HepG2 (cell line): ENCODE measurements at regions of chr7 and their contacts with region 1.

Region 1: GRCh38 chr7:107725151-107725740 is 18.7 kb upstream of the CBLL1 start:
- DNase-seq: peak; percentile 52
- ATAC-seq: no peak
- H3K4me3 ChIP-seq: no peak overlapping the region
- H3K27ac ChIP-seq: no peak overlapping the region
- H3K4me1 ChIP-seq: no peaks in the 10 kb centered on the region
- H3K27me3 ChIP-seq: no peaks in the 10 kb centered on the region; a peak in 1 of 5 replicates
- CTCF ChIP-seq: peak; percentile 73
- EP300 ChIP-seq: no peak
- POLR2A ChIP-seq: no peak
- RAD21 ChIP-seq: peak; percentile 35; the same call in 1 of the 2 replicates

Region 2: GRCh38 chr7:106793015-106793975 is 932.0 kb before region 1 on chr7:
- CTCF ChIA-PET with region 1: no interaction called
- POLR2A ChIA-PET with region 1: no interaction called
- in situ Hi-C with region 1: no loop called
- intact Hi-C with region 1: loop called (anchors 10 kb)
- DNase-seq: peak; percentile 7
- ATAC-seq: no peak
- H3K4me3 ChIP-seq: no peak overlapping the region
- H3K27ac ChIP-seq: no peak overlapping the region
- H3K4me1 ChIP-seq: no peaks in the 10 kb centered on the region
- H3K27me3 ChIP-seq: no peaks in the 10 kb centered on the region; a peak in 1 of 5 replicates
- CTCF ChIP-seq: peak; percentile 60
- EP300 ChIP-seq: no peak
- POLR2A ChIP-seq: no peak
- RAD21 ChIP-seq: no peak

Region 3: DNA sequence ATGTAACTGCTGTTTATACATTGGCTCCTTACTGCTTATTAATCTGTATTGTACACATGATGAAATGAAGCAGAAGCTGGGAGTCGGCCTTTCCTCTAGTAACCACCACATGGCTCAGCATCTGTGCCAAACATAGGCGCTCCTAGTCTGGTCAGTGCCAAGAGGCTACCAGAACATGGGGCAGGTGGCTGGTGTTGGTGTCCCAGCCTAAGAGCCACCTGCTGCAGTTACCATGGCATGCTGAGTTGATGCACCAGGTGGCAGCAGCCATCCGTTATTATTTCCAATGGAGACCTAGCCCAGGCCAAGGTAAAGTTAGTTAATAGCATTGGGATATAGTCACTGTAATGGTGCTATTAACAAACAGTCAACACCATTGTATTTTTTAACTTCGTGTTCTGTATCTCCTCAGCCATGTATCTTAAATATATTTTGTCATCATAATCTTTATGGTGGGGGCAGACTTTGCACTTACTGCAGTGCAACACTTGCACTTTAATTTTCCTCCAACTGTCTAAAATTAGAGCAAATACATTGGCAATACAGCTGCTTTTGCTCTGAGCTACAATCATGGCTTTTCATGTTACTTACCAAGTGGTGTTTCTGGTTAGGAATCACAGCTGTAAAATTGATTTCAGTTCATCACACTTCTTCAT is 523.3 kb before region 1 on chr7:
- CTCF ChIA-PET with region 1: no interaction called
- POLR2A ChIA-PET with region 1: no interaction called
- in situ Hi-C with region 1: loop called (anchors 25 kb)
- intact Hi-C with region 1: loop called (anchors 5 kb)
- DNase-seq: peak; percentile 27
- ATAC-seq: peak; percentile 94
- H3K4me3 ChIP-seq: no peak overlapping the region
- H3K27ac ChIP-seq: no peak overlapping the region
- H3K4me1 ChIP-seq: no peaks in the 10 kb centered on the region
- H3K27me3 ChIP-seq: no peaks in the 10 kb centered on the region
- CTCF ChIP-seq: peak; percentile 66
- EP300 ChIP-seq: no peak
- POLR2A ChIP-seq: no peak
- RAD21 ChIP-seq: peak; percentile 51; the same call in 1 of the 2 replicates

Region 4: GRCh38 chr7:107469929-107470328 is 255.3 kb before region 1 on chr7 and contains the start of gene GPR22:
- CTCF ChIA-PET with region 1: interaction called, 16 read pairs
- POLR2A ChIA-PET with region 1: no interaction called
- in situ Hi-C with region 1: loop called (anchors 5 kb)
- intact Hi-C with region 1: no loop called
- DNase-seq: no peak
- ATAC-seq: no peak
- H3K4me3 ChIP-seq: no peak within 1 kb of the TSS
- H3K27ac ChIP-seq: no peak within 1 kb of the TSS
- H3K4me1 ChIP-seq: no peaks in the 10 kb centered on the region
- H3K27me3 ChIP-seq: no peaks in the 10 kb centered on the region
- CTCF ChIP-seq: no peak
- EP300 ChIP-seq: no peak
- POLR2A ChIP-seq: no peak
- RAD21 ChIP-seq: no peak
- total RNA-seq, gene GPR22: not detected in 2 replicates

Region 5: DNA sequence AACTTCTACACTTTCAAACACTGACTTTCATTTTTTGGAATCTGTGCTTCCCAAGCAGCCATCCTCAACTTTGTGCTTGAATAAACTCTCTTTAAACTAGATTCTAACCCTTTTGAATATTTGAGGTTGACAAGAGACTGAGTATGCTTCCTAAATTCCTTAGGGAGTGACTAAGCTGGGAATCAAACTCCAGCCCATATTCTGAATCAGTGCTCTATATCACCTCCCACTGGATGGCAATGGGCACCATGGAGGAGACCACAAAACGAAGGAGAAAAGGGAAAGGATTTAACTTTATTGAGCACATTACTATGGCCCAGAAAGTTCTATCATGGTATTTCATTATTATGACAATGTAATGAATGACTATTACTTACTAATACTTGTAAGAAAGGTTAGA is 81.8 kb before region 1 on chr7:
- CTCF ChIA-PET with region 1: no interaction called
- POLR2A ChIA-PET with region 1: no interaction called
- in situ Hi-C with region 1: no loop called
- intact Hi-C with region 1: no loop called
- DNase-seq: no peak
- ATAC-seq: no peak
- H3K4me3 ChIP-seq: no peak overlapping the region
- H3K27ac ChIP-seq: no peak overlapping the region
- H3K4me1 ChIP-seq: no peaks in the 10 kb centered on the region
- H3K27me3 ChIP-seq: peaks cover 0 to 4% of the 10 kb centered on the region in 2 experiments; a peak in 1 of 5 replicates
- CTCF ChIP-seq: no peak
- EP300 ChIP-seq: no peak
- POLR2A ChIP-seq: no peak
- RAD21 ChIP-seq: no peak

Region 6: DNA sequence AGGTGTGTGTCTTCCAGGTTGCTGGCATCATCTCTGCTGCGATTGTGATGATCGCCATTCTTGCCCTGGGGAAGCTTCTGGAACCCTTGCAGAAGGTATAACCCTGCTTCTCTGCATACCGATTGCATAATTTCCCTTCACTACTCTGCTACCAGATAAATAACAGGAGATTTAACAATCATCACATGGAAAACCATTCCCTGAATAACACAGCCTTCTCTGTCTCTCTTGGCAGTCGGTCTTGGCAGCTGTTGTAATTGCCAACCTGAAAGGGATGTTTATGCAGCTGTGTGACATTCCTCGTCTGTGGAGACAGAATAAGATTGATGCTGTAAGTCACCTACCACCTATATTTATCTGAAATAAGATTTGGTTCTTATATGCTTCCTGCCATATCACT is 30.9 kb before region 1 on chr7:
- CTCF ChIA-PET with region 1: no interaction called
- POLR2A ChIA-PET with region 1: no interaction called
- in situ Hi-C with region 1: no loop called
- intact Hi-C with region 1: no loop called
- DNase-seq: no peak
- ATAC-seq: no peak
- H3K4me3 ChIP-seq: no peak overlapping the region
- H3K27ac ChIP-seq: no peak overlapping the region
- H3K4me1 ChIP-seq: no peaks in the 10 kb centered on the region
- H3K27me3 ChIP-seq: peaks cover 0 to 23% of the 10 kb centered on the region in 2 experiments; a peak in 4 of 5 replicates
- CTCF ChIP-seq: no peak
- EP300 ChIP-seq: no peak
- POLR2A ChIP-seq: no peak
- RAD21 ChIP-seq: no peak

Region 7: DNA sequence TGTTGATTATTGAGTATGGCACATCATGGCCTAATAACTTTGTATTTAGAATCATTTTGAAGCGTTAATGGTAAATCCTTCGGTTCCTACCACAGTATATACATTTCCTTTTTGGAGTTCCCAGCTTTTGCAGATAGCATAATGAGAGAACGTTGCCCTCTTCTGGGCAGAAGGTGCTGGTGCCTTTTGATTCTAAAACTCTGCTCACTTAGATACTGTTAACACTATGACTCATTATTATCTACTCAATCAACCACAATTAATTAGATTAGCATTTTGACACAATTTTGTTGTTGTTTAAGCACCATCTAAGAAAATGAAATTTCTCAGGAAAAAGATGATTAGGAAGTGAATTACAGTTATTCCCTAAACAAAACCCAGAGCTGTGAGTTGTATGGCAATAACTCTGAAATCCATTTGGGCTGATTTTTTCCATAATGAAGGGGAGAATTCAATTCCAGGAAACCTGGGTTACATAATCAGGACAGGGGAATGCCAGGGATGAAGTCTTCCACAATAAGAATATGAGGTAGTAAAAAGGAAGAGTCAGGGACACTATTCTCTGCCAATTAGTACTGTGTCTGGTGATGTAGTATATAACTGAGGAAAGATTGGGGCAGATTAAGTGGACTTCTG is 154.3 kb after region 1 on chr7:
- CTCF ChIA-PET with region 1: interaction called, 3 read pairs
- POLR2A ChIA-PET with region 1: no interaction called
- in situ Hi-C with region 1: no loop called
- intact Hi-C with region 1: loop called (anchors 1 kb)
- DNase-seq: peak; percentile 49
- ATAC-seq: peak; percentile 82
- H3K4me3 ChIP-seq: no peak overlapping the region
- H3K27ac ChIP-seq: no peak overlapping the region
- H3K4me1 ChIP-seq: no peaks in the 10 kb centered on the region
- H3K27me3 ChIP-seq: peaks cover 0 to 8% of the 10 kb centered on the region in 2 experiments; a peak in 1 of 5 replicates
- CTCF ChIP-seq: peak; percentile 85
- EP300 ChIP-seq: no peak
- POLR2A ChIP-seq: no peak
- RAD21 ChIP-seq: peak; percentile 62; the same call in 1 of the 2 replicates